Vagina (tissue), 2 donors: ENCODE measurements at regions of chr19 and their contacts with region 1.

Region 1: DNA sequence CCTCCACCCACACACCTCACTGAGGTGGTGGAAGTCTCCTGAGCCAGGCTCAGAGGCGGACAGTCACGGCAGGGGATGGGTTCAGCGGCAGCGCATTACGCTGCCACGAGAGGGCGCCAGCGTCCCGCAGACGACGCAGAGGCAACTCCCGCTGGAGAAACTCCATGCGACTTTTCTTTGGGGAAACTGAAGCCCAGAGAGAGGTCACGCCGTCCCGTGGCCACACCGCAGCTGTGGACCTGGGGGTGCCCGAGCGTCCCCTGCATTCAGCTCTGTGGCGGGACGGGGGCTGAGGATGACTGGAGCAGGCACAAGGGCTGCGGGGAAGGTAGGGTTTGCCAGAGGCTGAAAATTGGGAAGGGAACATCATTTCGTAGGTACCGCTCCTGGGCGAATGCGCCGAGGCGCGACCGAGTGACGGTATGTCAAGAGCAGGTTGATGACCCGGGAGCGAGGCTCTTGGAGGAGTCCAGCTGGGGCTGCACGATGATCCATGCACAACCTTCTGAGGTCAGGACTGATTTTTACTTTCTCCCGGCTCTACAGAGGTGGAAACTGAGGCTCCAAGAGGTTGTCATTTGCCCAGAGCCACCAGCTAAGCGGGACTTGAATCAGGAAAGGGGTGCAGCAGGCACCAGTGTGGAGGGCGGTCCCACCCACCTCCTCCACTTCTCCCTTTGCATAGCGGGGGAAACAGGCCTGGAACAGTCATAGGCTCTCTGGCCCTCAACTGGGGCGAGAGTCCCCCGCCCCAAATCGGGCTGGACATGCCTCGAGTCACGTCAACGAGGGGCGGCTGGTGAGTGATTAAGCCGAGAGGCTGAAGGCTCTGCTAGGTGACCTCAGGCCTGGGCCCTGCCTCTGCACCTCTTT is 690 bp upstream of the ARRDC2 start:
- DNase-seq: peak in 1 of 2 donors; percentile 89
- H3K4me3 ChIP-seq: peak overlapping the region; percentile 46 to 51
- H3K27ac ChIP-seq: peak overlapping the region; percentile 85
- H3K4me1 ChIP-seq: peaks cover 45% of the 10 kb centered on the region
- H3K27me3 ChIP-seq: no peaks in the 10 kb centered on the region
- CTCF ChIP-seq: peak; percentile 90 to 98 (median 96)
- POLR2A ChIP-seq: no peak

Region 2: GRCh38 chr19:17947815-17948513 is 59.3 kb before region 1 on chr19:
- intact Hi-C with region 1: no loop called
- DNase-seq: no peak
- H3K4me3 ChIP-seq: peak overlapping the region; percentile 56 to 67
- H3K27ac ChIP-seq: peak overlapping the region; percentile 57
- H3K4me1 ChIP-seq: peaks cover 53% of the 10 kb centered on the region
- H3K27me3 ChIP-seq: peaks cover 18% of the 10 kb centered on the region
- CTCF ChIP-seq: no peak
- POLR2A ChIP-seq: no peak

Region 3: DNA sequence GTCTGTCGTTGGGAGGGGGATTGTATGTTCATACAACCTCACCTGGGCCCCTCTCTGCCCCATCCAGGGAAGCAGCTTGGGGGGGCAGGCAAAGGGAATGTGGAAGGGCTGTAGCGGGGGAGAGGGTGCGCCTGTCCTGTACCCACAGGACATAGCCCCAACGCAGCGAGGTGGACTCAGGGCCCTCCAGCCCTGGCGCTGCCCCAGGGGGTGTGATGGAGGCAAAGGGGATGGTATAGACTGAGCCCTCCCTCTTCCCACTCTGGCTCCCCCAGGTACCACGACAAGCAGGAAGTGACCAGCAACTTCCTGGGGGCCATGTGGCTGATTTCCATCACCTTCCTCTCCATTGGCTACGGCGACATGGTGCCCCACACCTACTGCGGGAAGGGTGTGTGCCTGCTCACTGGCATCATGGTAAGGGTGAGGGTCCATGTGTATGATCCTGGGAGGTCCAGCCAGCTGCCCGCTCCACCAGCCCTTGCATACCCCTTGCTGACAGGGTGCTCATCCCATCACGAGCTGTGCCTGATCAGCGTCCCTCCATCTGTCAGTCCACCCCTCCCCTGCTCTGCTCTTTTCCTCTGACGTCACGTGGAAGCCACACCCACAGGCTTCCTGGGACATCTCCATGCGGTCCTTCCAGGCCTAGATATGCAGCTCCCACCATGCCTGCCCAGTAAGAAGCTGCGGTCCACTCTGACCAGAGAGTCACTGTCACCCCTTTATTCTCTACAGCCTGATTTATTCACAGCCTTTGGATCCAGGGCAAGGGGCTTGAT is 22.1 kb before region 1 on chr19:
- intact Hi-C with region 1: no loop called
- DNase-seq: no peak
- H3K4me3 ChIP-seq: no peak overlapping the region
- H3K27ac ChIP-seq: no peak overlapping the region
- H3K4me1 ChIP-seq: no peaks in the 10 kb centered on the region
- H3K27me3 ChIP-seq: no peaks in the 10 kb centered on the region
- CTCF ChIP-seq: no peak
- POLR2A ChIP-seq: no peak

Region 4: GRCh38 chr19:18041054-18041453 is 33.8 kb after region 1 on chr19:
- intact Hi-C with region 1: loop called (anchors 1 kb)
- DNase-seq: no peak
- H3K4me3 ChIP-seq: no peak overlapping the region
- H3K27ac ChIP-seq: no peak overlapping the region
- H3K4me1 ChIP-seq: peaks cover 10% of the 10 kb centered on the region
- H3K27me3 ChIP-seq: no peaks in the 10 kb centered on the region
- CTCF ChIP-seq: no peak
- POLR2A ChIP-seq: no peak

Region 5: DNA sequence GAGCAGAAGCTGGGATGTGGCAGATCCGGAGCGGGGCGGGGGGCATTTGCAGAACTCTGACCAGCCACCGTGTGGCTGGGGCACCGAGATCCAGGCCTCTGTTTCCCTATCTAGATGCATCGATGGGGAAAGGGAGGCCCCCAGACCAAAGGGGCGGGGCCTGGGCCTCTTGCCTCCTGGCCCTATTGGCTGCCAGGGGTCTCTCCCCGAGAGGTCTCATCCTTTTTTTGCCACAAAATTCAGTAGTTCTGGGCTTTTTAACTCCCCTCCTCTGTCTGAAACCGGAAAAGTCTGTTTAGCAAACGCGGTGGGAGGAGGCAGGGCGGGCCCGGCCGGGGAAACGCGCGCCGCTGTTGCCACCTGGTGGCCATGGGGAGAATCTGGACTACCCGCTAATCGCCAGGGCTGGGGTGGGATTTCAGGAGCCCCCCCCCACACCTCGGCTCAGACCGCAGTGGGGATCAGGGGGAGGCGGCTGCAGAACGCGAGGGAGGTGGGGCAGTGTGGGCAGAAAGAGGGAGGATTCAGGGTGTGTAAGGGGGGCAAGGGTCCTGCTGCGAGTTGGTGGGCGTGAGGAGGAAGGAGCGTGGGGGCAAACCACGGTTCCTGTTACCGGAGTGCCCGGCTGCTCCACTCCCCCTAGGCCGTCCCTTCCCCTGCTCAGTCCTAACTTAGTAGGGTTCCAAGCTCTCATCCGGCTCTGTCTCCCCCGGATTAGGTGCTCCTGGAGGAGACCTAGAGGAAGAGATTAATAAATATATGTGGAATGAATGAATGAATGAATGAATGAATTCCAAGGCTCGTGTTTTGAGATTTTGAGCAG is 51.1 kb after region 1 on chr19:
- intact Hi-C with region 1: loop called (anchors 2 kb)
- DNase-seq: no peak
- H3K4me3 ChIP-seq: peak overlapping the region; percentile 20 to 27
- H3K27ac ChIP-seq: peak overlapping the region; percentile 89
- H3K4me1 ChIP-seq: peaks cover 16% of the 10 kb centered on the region
- H3K27me3 ChIP-seq: no peaks in the 10 kb centered on the region
- CTCF ChIP-seq: peak; percentile 93 to 98 (median 97)
- POLR2A ChIP-seq: no peak

Region 6: GRCh38 chr19:18074190-18074589 is 66.9 kb after region 1 on chr19:
- intact Hi-C with region 1: no loop called
- DNase-seq: no peak
- H3K4me3 ChIP-seq: no peak overlapping the region
- H3K27ac ChIP-seq: no peak overlapping the region
- H3K4me1 ChIP-seq: no peaks in the 10 kb centered on the region
- H3K27me3 ChIP-seq: no peaks in the 10 kb centered on the region
- CTCF ChIP-seq: no peak
- POLR2A ChIP-seq: no peak